Activated CD8-positive, alpha-beta T cell treated with anti-CD3 and anti-CD28 coated beads for 36 hours (primary cell): ENCODE measurements at regions of chr5 and their contacts with region 1.

Region 1: DNA sequence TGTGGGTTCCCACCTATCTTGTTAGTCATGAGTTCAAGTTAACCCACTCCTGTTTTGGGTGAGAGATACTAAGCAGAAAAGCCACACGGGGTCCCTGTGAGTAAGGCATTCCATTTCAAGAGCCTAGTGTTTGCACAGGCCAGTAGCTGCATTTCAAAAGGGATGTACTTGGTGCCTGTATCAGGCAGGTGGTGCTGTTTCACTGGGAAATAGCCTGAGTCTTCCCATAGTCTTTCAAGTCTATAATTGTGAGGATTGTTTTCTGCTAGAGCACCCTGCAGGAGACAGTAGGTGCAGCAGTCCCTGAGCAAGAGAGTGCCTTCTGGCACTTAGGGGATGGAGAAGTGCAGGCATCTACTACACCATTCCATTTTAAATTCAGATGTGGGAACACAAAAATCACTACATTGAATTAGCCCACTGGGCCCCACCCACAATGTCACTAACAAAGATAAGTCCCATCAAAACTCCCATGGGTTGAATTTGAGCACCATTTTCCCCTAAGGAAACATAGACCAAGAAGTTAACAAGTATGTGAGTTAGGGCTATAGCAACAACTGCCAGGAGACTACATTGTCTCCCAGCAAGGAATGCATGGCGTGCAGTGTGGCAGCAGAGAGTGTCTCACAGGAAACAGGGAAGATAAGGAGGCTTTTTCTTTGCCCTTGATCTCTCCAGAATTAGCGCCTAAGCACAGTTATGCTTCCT is 263.2 kb downstream of the COX7C start:
- DNase-seq: peak; percentile 64
- ATAC-seq: peak; percentile 99
- H3K4me3 Mint-ChIP-seq: no peak overlapping the region
- H3K27ac Mint-ChIP-seq: no peak overlapping the region
- H3K4me1 Mint-ChIP-seq: no peaks in the 10 kb centered on the region
- H3K27me3 Mint-ChIP-seq: peaks cover 5% of the 10 kb centered on the region
- CTCF ChIP-seq: peak; percentile 66

Region 2: DNA sequence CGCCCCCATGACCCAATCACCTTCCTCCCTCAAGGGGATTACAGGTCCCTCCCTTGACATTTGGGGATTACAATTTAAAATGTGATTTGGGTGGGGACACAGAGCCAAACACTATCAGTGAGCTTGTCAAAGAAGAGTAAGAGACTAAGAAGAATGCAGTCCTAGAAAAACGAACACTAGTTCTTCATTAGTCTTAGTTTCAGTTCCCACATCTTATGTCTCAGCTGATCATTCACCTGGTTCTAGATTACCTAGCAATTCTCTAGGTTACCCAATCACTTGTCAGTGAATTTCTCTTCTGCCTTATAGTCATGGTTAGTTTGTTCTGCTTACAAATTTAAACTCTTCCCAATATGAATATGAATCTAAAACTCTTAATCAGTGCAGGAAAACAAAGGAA is 11.7 kb before region 1 on chr5:
- CTCF ChIA-PET with region 1: interaction called, 12 read pairs
- POLR2A ChIA-PET with region 1: no interaction called
- intact Hi-C with region 1: no loop called
- DNase-seq: no peak
- ATAC-seq: no peak
- H3K4me3 Mint-ChIP-seq: no peak overlapping the region
- H3K27ac Mint-ChIP-seq: no peak overlapping the region
- H3K4me1 Mint-ChIP-seq: no peaks in the 10 kb centered on the region
- H3K27me3 Mint-ChIP-seq: peaks cover 8% of the 10 kb centered on the region
- CTCF ChIP-seq: no peak

Region 3: DNA sequence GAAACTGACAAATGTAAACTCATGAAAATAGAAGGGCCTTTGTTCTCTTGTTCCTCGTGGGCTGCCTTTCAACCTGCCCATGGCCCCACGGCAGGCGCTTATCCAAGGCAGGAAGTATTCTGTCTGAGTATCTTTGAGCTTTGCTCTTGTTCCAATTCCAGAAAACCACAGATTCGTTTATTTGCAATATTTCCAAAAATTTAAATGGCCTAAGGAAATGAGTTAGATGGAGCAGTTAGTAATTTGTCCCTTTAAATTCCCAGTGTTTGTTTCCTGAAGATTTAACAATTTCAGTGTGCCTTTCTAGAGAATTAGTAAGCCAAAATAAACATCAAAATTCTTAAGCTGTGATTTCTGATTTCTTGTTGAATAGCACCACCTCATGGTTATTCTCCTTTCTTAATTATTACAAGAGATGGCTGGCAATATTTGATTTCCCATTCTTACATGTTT is 87.4 kb after region 1 on chr5:
- CTCF ChIA-PET with region 1: interaction called, 45 read pairs
- POLR2A ChIA-PET with region 1: no interaction called
- intact Hi-C with region 1: loop called (anchors 5 kb)
- DNase-seq: no peak
- ATAC-seq: no peak
- H3K4me3 Mint-ChIP-seq: no peak overlapping the region
- H3K27ac Mint-ChIP-seq: no peak overlapping the region
- H3K4me1 Mint-ChIP-seq: peaks cover 7% of the 10 kb centered on the region
- H3K27me3 Mint-ChIP-seq: peaks cover 1% of the 10 kb centered on the region
- CTCF ChIP-seq: peak; percentile 50

Region 4: GRCh38 chr5:87008751-87009560 is 128.0 kb after region 1 on chr5:
- CTCF ChIA-PET with region 1: interaction called, 33 read pairs
- POLR2A ChIA-PET with region 1: interaction called, 5 read pairs
- intact Hi-C with region 1: loop called (anchors 2 kb)
- DNase-seq: no peak
- ATAC-seq: no peak
- H3K4me3 Mint-ChIP-seq: no peak overlapping the region
- H3K27ac Mint-ChIP-seq: no peak overlapping the region
- H3K4me1 Mint-ChIP-seq: no peaks in the 10 kb centered on the region
- H3K27me3 Mint-ChIP-seq: no peaks in the 10 kb centered on the region
- CTCF ChIP-seq: no peak

Region 5: GRCh38 chr5:88033191-88033590 is 1152.3 kb after region 1 on chr5:
- CTCF ChIA-PET with region 1: no interaction called
- POLR2A ChIA-PET with region 1: no interaction called
- intact Hi-C with region 1: no loop called
- DNase-seq: no peak
- ATAC-seq: no peak
- H3K4me3 Mint-ChIP-seq: no peak overlapping the region
- H3K27ac Mint-ChIP-seq: no peak overlapping the region
- H3K4me1 Mint-ChIP-seq: no peaks in the 10 kb centered on the region
- H3K27me3 Mint-ChIP-seq: peaks cover 3% of the 10 kb centered on the region
- CTCF ChIP-seq: no peak